CD8-positive, alpha-beta T cell (primary cell): ENCODE measurements at regions of chr11 and their contacts with region 1.

Region 1: GRCh38 chr11:62419314-62419929 is 589 bp downstream of the SCGB1A1 start:
- DNase-seq: no peak
- ATAC-seq: no peak
- H3K4me3 ChIP-seq: no peak overlapping the region
- H3K4me3 Mint-ChIP-seq: no peak overlapping the region
- H3K27ac ChIP-seq: no peak overlapping the region
- H3K27ac Mint-ChIP-seq: no peak overlapping the region
- H3K4me1 ChIP-seq: peaks cover 1% of the 10 kb centered on the region
- H3K4me1 Mint-ChIP-seq: peaks cover 8% of the 10 kb centered on the region
- H3K27me3 ChIP-seq: no peaks in the 10 kb centered on the region
- H3K27me3 Mint-ChIP-seq: no peaks in the 10 kb centered on the region
- CTCF ChIP-seq: no peak

Region 2: GRCh38 chr11:62567018-62567633 is 147.7 kb after region 1 on chr11:
- CTCF ChIA-PET with region 1: interaction called, 51 read pairs
- POLR2A ChIA-PET with region 1: interaction called, 3 read pairs
- intact Hi-C with region 1: no loop called
- DNase-seq: no peak
- ATAC-seq: no peak
- H3K4me3 ChIP-seq: no peak overlapping the region
- H3K4me3 Mint-ChIP-seq: no peak overlapping the region
- H3K27ac ChIP-seq: no peak overlapping the region
- H3K27ac Mint-ChIP-seq: peak overlapping the region; percentile 57
- H3K4me1 ChIP-seq: peaks cover 8% of the 10 kb centered on the region
- H3K4me1 Mint-ChIP-seq: peaks cover 35% of the 10 kb centered on the region
- H3K27me3 ChIP-seq: no peaks in the 10 kb centered on the region
- H3K27me3 Mint-ChIP-seq: no peaks in the 10 kb centered on the region
- CTCF ChIP-seq: no peak

Region 3: GRCh38 chr11:62632492-62632891 is 213.1 kb after region 1 on chr11:
- CTCF ChIA-PET with region 1: no interaction called
- POLR2A ChIA-PET with region 1: no interaction called
- intact Hi-C with region 1: no loop called
- DNase-seq: no peak
- ATAC-seq: no peak
- H3K4me3 ChIP-seq: no peak overlapping the region
- H3K4me3 Mint-ChIP-seq: no peak overlapping the region
- H3K27ac ChIP-seq: no peak overlapping the region
- H3K27ac Mint-ChIP-seq: peak overlapping the region; percentile 32
- H3K4me1 ChIP-seq: peaks cover 27% of the 10 kb centered on the region
- H3K4me1 Mint-ChIP-seq: peaks cover 20% of the 10 kb centered on the region
- H3K27me3 ChIP-seq: no peaks in the 10 kb centered on the region
- H3K27me3 Mint-ChIP-seq: no peaks in the 10 kb centered on the region
- CTCF ChIP-seq: no peak